HEK293T (cell line): ENCODE measurements at regions of chr10 and their contacts with region 1.

Region 1: GRCh38 chr10:97676770-97677581 is 10.1 kb downstream of the AVPI1 start:
- DNase-seq: peak; percentile 82

Region 2: GRCh38 chr10:97731346-97732051 is 54.5 kb after region 1 on chr10:
- CTCF ChIA-PET with region 1: interaction called, 5 read pairs
- POLR2A ChIA-PET with region 1: interaction called, 10 read pairs
- DNase-seq: peak; percentile 76